GM12878 (cell line): ENCODE measurements at regions of chr6 and their contacts with region 1.

Region 1: DNA sequence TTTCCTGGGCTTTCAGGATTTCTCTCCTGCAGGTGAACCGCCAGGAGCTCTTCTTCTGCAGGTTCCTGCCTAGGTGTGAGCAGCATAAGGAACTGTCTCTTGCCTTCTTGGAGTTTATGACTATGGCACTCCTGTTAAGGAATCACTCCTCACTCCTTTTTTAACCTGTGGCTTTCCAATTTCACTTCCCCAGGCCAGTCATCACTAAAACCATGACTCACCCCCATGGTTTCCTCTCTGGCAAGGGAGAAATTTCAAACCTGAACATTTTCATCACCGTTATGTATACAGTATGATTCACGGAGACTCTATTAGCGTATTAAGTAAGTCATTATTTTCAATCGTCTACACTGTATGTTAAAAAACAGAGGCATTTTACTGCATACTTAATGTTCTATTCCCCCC is 78.2 kb upstream of the ARID1B start:
- DNase-seq: peak; percentile 85
- ATAC-seq: peak; percentile 66
- H3K4me3 ChIP-seq: peak overlapping the region; percentile 65
- H3K27ac ChIP-seq: peak overlapping the region; percentile 97
- H3K4me1 ChIP-seq: peaks cover 57% of the 10 kb centered on the region
- H3K27me3 ChIP-seq: no peaks in the 10 kb centered on the region
- CTCF ChIP-seq: no peak
- EP300 ChIP-seq: peak; percentile 85 to 92
- POLR2A ChIP-seq: no peak; the same call in 1 of the 2 replicates
- RAD21 ChIP-seq: peak; percentile 39; the same call in 1 of the 2 replicates

Region 2: GRCh38 chr6:155314092-155314772 is 1384.8 kb before region 1 on chr6 and contains the start of gene TFB1M:
- CTCF ChIA-PET with region 1: no interaction called
- POLR2A ChIA-PET with region 1: interaction called, 6 read pairs
- RAD21 ChIA-PET with region 1: no interaction called
- SMC1A ChIA-PET with region 1: no interaction called
- in situ Hi-C with region 1: no loop called
- intact Hi-C with region 1: loop called (anchors 10 kb)
- DNase-seq: peak; percentile 99
- ATAC-seq: peak; percentile 96
- H3K4me3 ChIP-seq: peak within 1 kb of the TSS; percentile 88
- H3K27ac ChIP-seq: peak within 1 kb of the TSS; percentile 95
- H3K4me1 ChIP-seq: no peaks in the 10 kb centered on the region
- H3K27me3 ChIP-seq: no peaks in the 10 kb centered on the region
- CTCF ChIP-seq: no peak
- EP300 ChIP-seq: 0 out of 4 replicates have a peak, but pooled peaks of 1 of the 2 experiments have one; percentile 30
- POLR2A ChIP-seq: peak; percentile 97
- RAD21 ChIP-seq: no peak
- polyA plus RNA-seq, gene TFB1M: 95.8 to 117 TPM

Region 3: DNA sequence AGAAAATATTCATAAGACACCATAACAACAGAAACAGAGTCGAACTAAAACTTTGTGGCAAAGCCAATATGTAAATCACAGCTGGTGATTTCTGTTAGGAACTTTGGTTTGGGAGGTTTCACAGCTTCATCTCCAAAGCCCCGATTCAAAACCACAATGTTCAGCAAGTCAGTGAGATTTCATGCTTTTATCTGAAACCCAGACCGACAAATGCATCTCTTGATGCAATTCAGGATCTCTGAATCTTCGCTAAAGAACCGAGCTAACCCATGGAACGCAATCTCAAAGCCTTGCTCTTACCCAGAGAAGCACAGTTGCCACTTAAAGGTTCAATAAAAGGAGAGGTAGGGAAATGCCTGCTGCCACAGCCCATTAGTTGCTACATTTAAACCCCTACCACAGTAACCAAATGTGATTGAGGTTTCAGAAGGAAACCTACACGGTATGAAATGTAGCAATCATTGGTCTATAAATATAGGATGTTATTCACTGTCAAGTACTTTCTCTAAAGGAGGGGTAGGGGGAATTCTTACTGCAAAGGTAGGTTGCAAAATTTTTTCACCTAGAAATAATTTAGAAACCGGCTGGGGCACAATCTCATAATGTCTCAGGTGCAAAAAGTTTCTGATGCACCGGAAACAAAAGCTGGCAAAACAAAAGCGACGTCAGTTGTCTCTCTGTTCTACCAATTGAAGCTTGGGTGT is 302.8 kb before region 1 on chr6:
- CTCF ChIA-PET with region 1: no interaction called
- POLR2A ChIA-PET with region 1: no interaction called
- RAD21 ChIA-PET with region 1: no interaction called
- SMC1A ChIA-PET with region 1: no interaction called
- in situ Hi-C with region 1: no loop called
- intact Hi-C with region 1: loop called (anchors 5 kb)
- DNase-seq: peak; percentile 63
- ATAC-seq: peak; percentile 76
- H3K4me3 ChIP-seq: peak overlapping the region; percentile 46; the same call in 1 of the 2 replicates
- H3K27ac ChIP-seq: peak overlapping the region; percentile 68; the same call in 1 of the 2 replicates
- H3K4me1 ChIP-seq: peaks cover 27% of the 10 kb centered on the region
- H3K27me3 ChIP-seq: peaks cover 0 to 26% of the 10 kb centered on the region in 2 experiments; a peak in 2 of 4 replicates
- CTCF ChIP-seq: no peak
- EP300 ChIP-seq: no peak
- POLR2A ChIP-seq: no peak
- RAD21 ChIP-seq: no peak

Region 4: GRCh38 chr6:156557251-156557910 is 141.6 kb before region 1 on chr6:
- CTCF ChIA-PET with region 1: no interaction called
- POLR2A ChIA-PET with region 1: no interaction called
- RAD21 ChIA-PET with region 1: no interaction called
- SMC1A ChIA-PET with region 1: no interaction called
- in situ Hi-C with region 1: no loop called
- intact Hi-C with region 1: no loop called
- DNase-seq: no peak
- ATAC-seq: no peak
- H3K4me3 ChIP-seq: no peak overlapping the region
- H3K27ac ChIP-seq: no peak overlapping the region
- H3K4me1 ChIP-seq: peaks cover 3% of the 10 kb centered on the region; the same call in 1 of the 2 replicates
- H3K27me3 ChIP-seq: no peaks in the 10 kb centered on the region
- CTCF ChIP-seq: no peak
- EP300 ChIP-seq: no peak
- POLR2A ChIP-seq: no peak
- RAD21 ChIP-seq: no peak

Region 5: GRCh38 chr6:156686995-156687788 is 11.8 kb before region 1 on chr6:
- CTCF ChIA-PET with region 1: interaction called, 16 read pairs
- POLR2A ChIA-PET with region 1: interaction called, 8 read pairs
- RAD21 ChIA-PET with region 1: interaction called, 16 read pairs
- SMC1A ChIA-PET with region 1: interaction called, 31 read pairs
- in situ Hi-C with region 1: no loop called
- intact Hi-C with region 1: loop called (anchors 1 kb)
- DNase-seq: no peak
- ATAC-seq: peak; percentile 69
- H3K4me3 ChIP-seq: peak overlapping the region; percentile 93
- H3K27ac ChIP-seq: peak overlapping the region; percentile 98
- H3K4me1 ChIP-seq: peaks cover 48% of the 10 kb centered on the region
- H3K27me3 ChIP-seq: no peaks in the 10 kb centered on the region
- CTCF ChIP-seq: no peak
- EP300 ChIP-seq: peak in 1 of 2 experiments; percentile 27; a peak in 1 of 4 replicates
- POLR2A ChIP-seq: peak; percentile 85
- RAD21 ChIP-seq: no peak; the same call in 1 of the 2 replicates

Region 6: DNA sequence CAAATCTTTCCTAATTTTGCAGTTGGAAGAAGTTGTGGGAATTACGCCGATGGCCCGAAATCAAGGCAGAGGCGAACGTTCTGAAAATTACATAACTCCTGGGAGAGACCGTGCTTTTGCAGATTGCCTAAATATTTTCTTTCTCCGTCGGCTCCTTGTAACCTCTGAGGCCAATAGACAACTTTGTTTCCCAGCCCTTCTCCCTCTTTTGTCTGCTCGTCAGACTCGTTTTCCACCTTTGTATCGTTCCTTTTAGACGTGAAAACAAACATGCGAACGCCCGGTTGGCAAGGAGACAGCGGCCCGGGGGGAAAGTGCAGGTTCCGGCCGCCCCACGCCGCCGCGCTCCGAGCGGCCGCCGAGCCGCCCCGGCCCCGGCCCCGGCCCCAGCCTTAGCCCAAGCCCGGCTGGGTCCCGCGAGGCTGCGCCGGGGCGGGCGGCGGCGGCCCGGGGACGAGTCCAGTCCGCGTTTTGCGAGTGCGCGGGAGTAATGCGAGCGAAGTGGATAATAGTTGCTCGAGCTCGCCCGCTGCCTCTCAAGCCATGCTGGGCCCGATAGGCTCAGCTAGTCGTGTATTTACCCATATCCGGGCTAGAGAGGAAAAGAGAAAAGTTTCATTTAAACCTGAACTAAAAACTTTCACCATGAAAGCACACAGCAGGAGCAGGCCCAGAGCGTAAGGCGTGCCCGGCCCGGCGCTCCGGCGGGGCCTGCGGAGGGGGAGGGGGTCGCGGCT is 78.0 kb after region 1 on chr6 and contains the start of gene ARID1B:
- CTCF ChIA-PET with region 1: interaction called, 4 read pairs
- POLR2A ChIA-PET with region 1: interaction called, 7 read pairs
- RAD21 ChIA-PET with region 1: interaction called, 13 read pairs
- SMC1A ChIA-PET with region 1: interaction called, 11 read pairs
- in situ Hi-C with region 1: no loop called
- intact Hi-C with region 1: loop called (anchors 1 kb)
- DNase-seq: no peak
- ATAC-seq: peak; percentile 59
- H3K4me3 ChIP-seq: peak within 1 kb of the TSS; percentile 92
- H3K27ac ChIP-seq: peak within 1 kb of the TSS; percentile 94
- H3K4me1 ChIP-seq: peaks cover 17% of the 10 kb centered on the region
- H3K27me3 ChIP-seq: no peaks in the 10 kb centered on the region
- CTCF ChIP-seq: no peak
- EP300 ChIP-seq: no peak
- POLR2A ChIP-seq: peak; percentile 76
- RAD21 ChIP-seq: no peak
- polyA plus RNA-seq, gene ARID1B: 37.7 to 73.9 TPM

Region 7: DNA sequence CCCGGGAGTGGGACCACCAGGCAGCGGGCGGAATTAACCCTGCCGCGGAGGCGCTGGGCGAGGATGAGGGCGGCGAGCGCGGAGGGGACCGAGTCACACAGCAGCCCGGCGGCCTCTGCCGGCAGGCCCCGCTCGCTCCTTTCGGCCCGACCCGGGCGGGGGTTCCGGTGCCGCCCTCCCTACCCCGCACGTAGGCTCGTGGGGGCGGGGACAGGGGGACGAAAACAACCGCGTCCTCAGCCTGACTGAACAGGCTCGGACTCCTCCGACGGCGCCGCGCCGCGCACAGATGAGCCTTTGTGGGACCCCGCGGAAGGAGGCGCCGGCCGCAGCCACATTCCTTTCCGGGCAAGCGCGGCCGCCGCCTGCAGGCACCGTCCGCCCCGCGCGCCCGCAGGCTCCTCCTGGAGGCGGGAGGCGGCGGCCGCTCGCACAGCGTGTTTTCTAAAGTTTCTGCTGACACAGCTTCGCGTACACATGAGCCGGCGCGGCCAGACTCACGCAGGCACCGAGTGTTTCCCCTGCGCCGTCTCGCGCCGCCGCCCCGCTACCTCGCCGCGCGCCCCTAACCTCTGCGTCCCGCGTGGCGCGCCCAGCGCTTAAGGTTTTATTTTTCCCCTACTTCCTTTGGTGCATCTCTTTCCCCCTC is 322.4 kb after region 1 on chr6:
- CTCF ChIA-PET with region 1: no interaction called
- POLR2A ChIA-PET with region 1: no interaction called
- RAD21 ChIA-PET with region 1: no interaction called
- SMC1A ChIA-PET with region 1: interaction called, 3 read pairs
- in situ Hi-C with region 1: no loop called
- intact Hi-C with region 1: loop called (anchors 10 kb)
- DNase-seq: no peak
- ATAC-seq: peak; percentile 88
- H3K4me3 ChIP-seq: peak overlapping the region; percentile 86
- H3K27ac ChIP-seq: peak overlapping the region; percentile 95
- H3K4me1 ChIP-seq: peaks cover 32% of the 10 kb centered on the region
- H3K27me3 ChIP-seq: no peaks in the 10 kb centered on the region
- CTCF ChIP-seq: peak; percentile 17 to 42 (median 19); a peak in 4 of 6 replicates
- EP300 ChIP-seq: peak in 1 of 2 experiments; percentile 20; a peak in 1 of 4 replicates
- POLR2A ChIP-seq: peak; percentile 98
- RAD21 ChIP-seq: peak; percentile 17; the same call in 1 of the 2 replicates